ENCODE measurements at regions of chr12 and their contacts with region 1.

Region 1: DNA sequence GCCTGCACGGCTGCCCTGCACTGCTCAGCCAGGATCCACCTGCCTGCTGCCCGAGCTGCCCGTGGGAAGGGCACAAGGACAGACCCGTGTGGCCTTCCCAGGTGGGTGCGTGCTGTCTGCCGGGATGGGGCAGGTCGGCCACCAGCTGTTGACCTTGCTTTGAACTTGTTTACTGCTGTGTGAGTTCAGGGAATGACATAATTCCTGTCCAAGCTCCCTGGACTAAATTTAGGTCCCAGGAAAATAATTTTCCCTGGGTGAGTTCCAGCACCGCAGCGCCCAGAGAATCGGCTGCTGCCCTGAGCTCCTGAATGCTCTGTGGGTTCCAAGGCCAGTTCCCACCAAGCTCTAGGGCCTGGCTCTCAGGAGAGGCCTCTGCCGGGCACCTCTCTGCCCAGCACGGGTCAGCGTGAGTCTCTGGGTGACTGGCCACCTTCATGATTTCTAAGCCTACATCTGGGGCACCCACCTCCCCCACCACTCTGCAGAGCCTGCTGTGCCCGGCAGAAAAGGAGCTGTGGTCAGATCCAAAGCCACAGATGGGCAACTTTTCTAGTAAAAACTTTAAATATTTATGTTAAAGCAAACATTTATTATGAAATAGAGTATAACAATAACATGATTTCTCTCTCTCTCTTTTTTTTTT is 27.2 kb upstream of the MLXIP start:
- DNase-seq: no peak
- H3K4me3 ChIP-seq: no peak overlapping the region
- H3K27ac ChIP-seq: peak overlapping the region in 1 of 2 experiments; percentile 24; a peak in 1 of 4 replicates
- H3K4me1 ChIP-seq: peaks cover 3% of the 10 kb centered on the region in 2 experiments; a peak in 1 of 4 replicates
- H3K27me3 ChIP-seq: no peaks in the 10 kb centered on the region
- CTCF ChIP-seq: no peak
- EP300 ChIP-seq: no peak
- RAD21 ChIP-seq: no peak

Region 2: GRCh38 chr12:122064025-122064777 is 12.8 kb after region 1 on chr12:
- CTCF ChIA-PET with region 1: interaction called, 30 read pairs
- POLR2A ChIA-PET with region 1: interaction called, 4 read pairs
- DNase-seq: peak; percentile 92
- H3K4me3 ChIP-seq: peak overlapping the region; percentile 9 to 18; a peak in 2 of 4 replicates
- H3K27ac ChIP-seq: peak overlapping the region; percentile 79 to 93
- H3K4me1 ChIP-seq: peaks cover 28 to 30% of the 10 kb centered on the region in 2 experiments; a peak in 3 of 4 replicates
- H3K27me3 ChIP-seq: no peaks in the 10 kb centered on the region
- CTCF ChIP-seq: peak; percentile 63
- EP300 ChIP-seq: no peak
- RAD21 ChIP-seq: peak; percentile 54

Region 3: DNA sequence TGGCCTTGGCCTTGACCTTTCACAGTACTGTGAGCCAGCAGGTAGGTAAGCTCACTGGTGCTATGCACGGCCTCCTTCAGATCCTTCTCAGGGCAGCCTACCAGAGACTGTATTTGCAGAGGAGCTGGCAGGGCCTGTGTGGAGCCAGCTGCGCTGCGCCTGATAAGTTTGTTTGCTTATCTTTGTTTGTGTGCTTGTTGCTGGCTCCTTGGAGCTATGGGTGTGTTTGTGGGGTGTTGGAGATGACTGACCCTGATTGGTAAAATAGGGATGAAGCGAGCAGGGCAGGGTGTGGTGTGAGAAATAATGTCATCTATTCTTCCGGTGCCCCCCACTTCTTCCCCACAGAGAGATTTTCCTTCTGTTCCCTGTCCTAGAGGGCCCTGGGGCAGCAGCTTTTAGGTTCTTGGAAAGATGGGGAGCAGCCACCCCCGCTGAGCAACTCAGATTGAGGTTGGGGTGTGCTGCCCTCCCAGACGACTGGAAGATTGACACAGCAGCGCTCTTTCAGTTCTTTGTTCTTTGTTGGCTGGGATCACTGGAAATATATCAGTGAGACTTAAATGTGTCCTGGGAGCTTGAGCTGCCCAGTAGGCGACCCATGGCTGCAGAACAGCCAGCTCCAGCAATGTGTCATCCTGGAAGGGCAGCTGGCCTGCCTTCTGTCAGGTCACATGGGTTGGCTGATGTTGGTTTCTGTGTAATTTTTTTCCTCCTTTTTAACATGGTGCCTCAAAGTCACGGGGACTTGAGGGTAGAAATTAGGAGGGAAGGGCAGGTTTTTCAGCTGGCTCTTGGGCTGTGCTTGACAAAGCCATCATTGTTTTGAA is 46.8 kb after region 1 on chr12:
- CTCF ChIA-PET with region 1: interaction called, 20 read pairs
- POLR2A ChIA-PET with region 1: no interaction called
- DNase-seq: peak; percentile 75
- H3K4me3 ChIP-seq: no peak overlapping the region
- H3K27ac ChIP-seq: peak overlapping the region; percentile 51 to 54
- H3K4me1 ChIP-seq: peaks cover 25 to 39% of the 10 kb centered on the region in 2 experiments
- H3K27me3 ChIP-seq: no peaks in the 10 kb centered on the region
- CTCF ChIP-seq: no peak
- EP300 ChIP-seq: peak in 1 of 2 experiments; percentile 29; a peak in 1 of 4 replicates
- RAD21 ChIP-seq: no peak; the same call in 1 of the 2 replicates

Region 4: DNA sequence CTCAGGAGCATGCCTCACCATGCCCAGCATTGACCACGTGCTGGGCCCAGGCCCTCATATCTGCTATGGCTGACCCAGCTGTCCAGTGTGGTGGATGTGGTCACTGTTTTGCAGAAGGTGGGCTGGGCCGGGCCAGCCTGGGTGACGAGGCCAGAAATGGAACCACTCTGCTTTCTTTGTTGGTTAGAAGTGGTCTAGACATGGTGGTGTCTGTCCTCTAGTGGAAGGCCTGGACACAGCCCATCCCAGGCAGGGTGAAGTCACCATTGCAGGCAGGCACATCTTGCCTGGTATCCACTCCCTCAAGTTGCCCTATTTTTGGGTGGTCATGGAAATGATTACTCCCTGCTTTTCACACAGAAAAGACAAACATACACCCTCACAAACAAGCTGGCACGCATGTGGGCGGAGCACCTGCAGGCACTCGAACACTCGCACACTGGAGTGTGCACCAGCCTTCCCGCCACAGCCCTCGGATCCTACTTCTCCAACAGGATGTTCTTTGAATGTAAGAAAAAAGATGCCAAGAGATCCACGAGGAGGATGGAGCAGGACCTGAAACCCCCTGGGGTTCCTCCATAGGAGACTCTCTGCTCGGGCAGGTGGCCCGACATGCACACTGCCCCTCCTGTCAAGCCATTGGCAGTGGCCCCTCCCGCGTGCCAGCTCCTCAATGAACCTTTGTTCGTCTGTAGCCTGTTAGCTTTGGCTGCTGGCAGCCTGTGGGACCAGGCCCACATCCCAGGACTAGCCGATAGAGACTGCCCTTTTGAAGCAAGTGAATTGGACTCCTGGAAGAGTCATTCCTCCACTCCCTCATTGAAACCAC is 65.6 kb after region 1 on chr12:
- CTCF ChIA-PET with region 1: interaction called, 157 read pairs
- POLR2A ChIA-PET with region 1: interaction called, 5 read pairs
- DNase-seq: no peak
- H3K4me3 ChIP-seq: no peak overlapping the region
- H3K27ac ChIP-seq: no peak overlapping the region
- H3K4me1 ChIP-seq: peaks cover 0 to 1% of the 10 kb centered on the region in 2 experiments; a peak in 1 of 4 replicates
- H3K27me3 ChIP-seq: no peaks in the 10 kb centered on the region
- CTCF ChIP-seq: 0 out of 2 replicates have a peak, but pooled peaks have one; percentile 8
- EP300 ChIP-seq: no peak
- RAD21 ChIP-seq: peak; percentile 22; the same call in 1 of the 2 replicates

Region 5: DNA sequence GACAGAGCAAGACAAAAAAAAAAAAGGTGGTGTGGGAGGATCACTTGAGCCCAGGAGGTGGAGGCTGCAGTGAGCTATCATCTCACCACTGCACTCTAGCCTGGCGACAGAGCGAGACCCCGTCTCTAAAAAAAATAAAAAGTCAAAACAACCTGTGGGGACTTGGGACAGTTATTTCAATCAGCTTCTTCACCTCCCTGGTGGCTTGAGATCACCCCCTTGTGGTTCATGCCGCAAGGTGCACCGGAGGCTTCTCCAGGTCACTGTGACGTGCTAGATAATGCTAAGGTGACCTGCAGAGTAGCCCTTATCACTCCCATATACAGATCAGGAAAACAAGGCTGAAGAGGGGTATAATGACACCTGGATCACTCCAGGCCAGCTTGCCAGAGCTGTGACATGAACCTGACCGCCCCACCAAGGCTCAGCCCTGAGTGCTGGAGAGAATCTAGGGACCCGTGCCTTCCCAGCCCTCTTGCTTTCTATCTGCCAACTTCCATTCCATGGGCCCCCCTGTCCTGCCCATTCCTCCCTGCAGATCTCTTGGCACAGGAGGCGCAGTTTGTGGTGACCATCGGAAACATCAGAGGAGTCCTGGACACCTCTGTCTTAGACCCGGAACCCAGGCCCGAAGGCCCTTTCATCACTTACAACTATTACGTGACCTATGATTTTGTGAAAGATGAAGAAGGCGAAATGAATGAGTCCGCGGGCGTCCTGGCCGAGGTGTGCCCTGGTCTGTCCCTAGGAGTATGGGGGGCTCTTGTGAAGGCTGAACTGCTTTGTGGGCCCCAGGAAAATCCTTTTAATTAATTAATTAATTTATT is 139.7 kb after region 1 on chr12:
- CTCF ChIA-PET with region 1: interaction called, 21 read pairs
- POLR2A ChIA-PET with region 1: no interaction called
- DNase-seq: peak; percentile 87
- H3K4me3 ChIP-seq: no peak overlapping the region; a peak in 1 of 4 replicates
- H3K27ac ChIP-seq: no peak overlapping the region
- H3K4me1 ChIP-seq: no peaks in the 10 kb centered on the region
- H3K27me3 ChIP-seq: no peaks in the 10 kb centered on the region
- CTCF ChIP-seq: peak; percentile 86
- EP300 ChIP-seq: no peak
- RAD21 ChIP-seq: peak; percentile 90

Measured in SK-N-SH (cell line).